Activated naive CD4-positive, alpha-beta T cell treated with anti-CD3 and anti-CD28 coated beads for 36 hours (primary cell): ENCODE measurements at regions of chr19 and their contacts with region 1.

Region 1: GRCh38 chr19:10565567-10566407 is at the start of gene KRI1:
- DNase-seq: peak; percentile 99
- H3K4me3 Mint-ChIP-seq: peak within 1 kb of the TSS; percentile 94
- H3K27ac Mint-ChIP-seq: peak within 1 kb of the TSS; percentile 98
- H3K4me1 Mint-ChIP-seq: peaks cover 49% of the 10 kb centered on the region
- H3K27me3 Mint-ChIP-seq: no peaks in the 10 kb centered on the region
- total RNA-seq, gene KRI1: 50.2 to 51.7 TPM

Region 2: GRCh38 chr19:10416380-10417257 is 149.2 kb before region 1 on chr19:
- CTCF ChIA-PET with region 1: interaction called, 5 read pairs
- intact Hi-C with region 1: loop called (anchors 5 kb)
- DNase-seq: peak; percentile 94
- H3K4me3 Mint-ChIP-seq: peak overlapping the region; percentile 75
- H3K27ac Mint-ChIP-seq: peak overlapping the region; percentile 82
- H3K4me1 Mint-ChIP-seq: peaks cover 53% of the 10 kb centered on the region
- H3K27me3 Mint-ChIP-seq: peaks cover 40% of the 10 kb centered on the region

Region 3: DNA sequence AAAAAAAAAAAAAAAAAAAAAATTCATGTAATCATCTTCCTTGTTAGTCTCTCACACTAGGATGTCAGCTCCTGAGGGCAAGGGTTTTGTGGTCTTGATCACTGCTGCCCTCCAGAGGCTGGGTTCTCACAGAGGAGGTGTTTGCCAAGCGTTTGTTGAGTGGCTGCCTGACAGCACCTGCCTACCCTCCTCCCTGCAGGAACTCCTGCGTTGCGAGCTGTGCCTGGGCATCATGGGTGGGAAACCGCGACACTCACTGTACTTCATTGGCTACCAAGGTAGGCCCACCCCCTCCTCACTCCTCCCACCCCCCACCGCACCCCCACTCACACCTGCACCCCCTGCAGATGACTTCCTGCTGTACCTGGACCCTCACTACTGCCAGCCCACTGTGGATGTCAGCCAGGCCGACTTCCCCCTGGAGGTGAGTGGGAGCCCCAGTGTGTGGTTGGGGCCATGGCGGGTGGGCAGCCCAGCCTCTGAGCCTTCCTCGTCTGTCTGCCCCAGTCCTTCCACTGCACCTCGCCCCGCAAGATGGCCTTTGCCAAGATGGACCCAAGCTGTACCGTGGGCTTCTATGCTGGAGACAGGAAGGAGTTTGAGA is 14.0 kb before region 1 on chr19:
- CTCF ChIA-PET with region 1: interaction called, 9 read pairs
- intact Hi-C with region 1: loop called (anchors 1 kb)
- DNase-seq: peak; percentile 77
- H3K4me3 Mint-ChIP-seq: no peak overlapping the region
- H3K27ac Mint-ChIP-seq: peak overlapping the region; percentile 46
- H3K4me1 Mint-ChIP-seq: peaks cover 45% of the 10 kb centered on the region
- H3K27me3 Mint-ChIP-seq: no peaks in the 10 kb centered on the region

Region 4: GRCh38 chr19:10653715-10654492 is 88.1 kb after region 1 on chr19 and contains the start of gene ILF3:
- CTCF ChIA-PET with region 1: interaction called, 3 read pairs
- intact Hi-C with region 1: loop called (anchors 1 kb)
- DNase-seq: peak; percentile 100
- H3K4me3 Mint-ChIP-seq: peak within 1 kb of the TSS; percentile 93
- H3K27ac Mint-ChIP-seq: peak within 1 kb of the TSS; percentile 97
- H3K4me1 Mint-ChIP-seq: peaks cover 39% of the 10 kb centered on the region
- H3K27me3 Mint-ChIP-seq: no peaks in the 10 kb centered on the region
- total RNA-seq, gene ILF3: 399 to 408 TPM

Region 5: DNA sequence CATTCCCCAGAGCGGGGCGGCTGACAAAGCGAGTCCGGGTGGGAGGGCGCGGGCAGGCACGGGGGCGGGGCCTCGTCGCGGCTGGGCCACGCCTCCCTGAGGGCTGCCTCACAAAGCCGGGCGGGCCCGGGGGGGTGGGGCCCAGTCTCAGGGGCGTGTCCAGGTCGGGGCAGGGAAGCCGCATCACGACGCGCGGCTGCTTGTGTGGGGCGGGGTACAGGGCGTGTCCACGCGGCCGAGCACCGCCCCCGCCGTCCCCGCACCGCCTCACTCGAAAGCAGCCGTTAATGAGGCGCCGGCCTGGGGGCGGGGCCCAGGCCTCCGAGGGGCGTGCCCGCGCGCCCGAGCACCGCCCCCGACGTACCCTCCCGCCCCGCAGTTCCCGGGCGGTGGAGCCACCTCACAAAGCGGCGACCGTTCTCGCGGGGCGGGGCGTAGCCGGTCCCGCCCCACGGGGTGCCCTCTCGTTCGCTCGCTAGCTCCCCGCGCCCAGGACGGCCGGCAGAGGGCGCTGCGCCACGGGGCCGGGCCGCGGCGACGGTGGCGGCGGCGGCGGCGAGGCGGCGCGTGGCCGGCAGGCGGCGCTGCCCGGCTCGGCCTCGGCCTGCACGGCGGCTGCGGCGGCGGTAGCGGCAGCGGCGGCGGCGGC is 305.3 kb after region 1 on chr19 and contains the start of gene CARM1:
- CTCF ChIA-PET with region 1: no interaction called
- intact Hi-C with region 1: loop called (anchors 2 kb)
- DNase-seq: peak; percentile 99
- H3K4me3 Mint-ChIP-seq: peak within 1 kb of the TSS; percentile 85
- H3K27ac Mint-ChIP-seq: peak within 1 kb of the TSS; percentile 93
- H3K4me1 Mint-ChIP-seq: peaks cover 31% of the 10 kb centered on the region
- H3K27me3 Mint-ChIP-seq: no peaks in the 10 kb centered on the region
- total RNA-seq, gene CARM1: 88.4 to 89.3 TPM

Region 6: GRCh38 chr19:10884274-10884673 is 318.5 kb after region 1 on chr19:
- CTCF ChIA-PET with region 1: no interaction called
- intact Hi-C with region 1: no loop called
- DNase-seq: no peak
- H3K4me3 Mint-ChIP-seq: no peak overlapping the region
- H3K27ac Mint-ChIP-seq: no peak overlapping the region
- H3K4me1 Mint-ChIP-seq: peaks cover 14% of the 10 kb centered on the region
- H3K27me3 Mint-ChIP-seq: no peaks in the 10 kb centered on the region